PC-9 (cell line): ENCODE measurements at regions of chr6 and their contacts with region 1.

Region 1: GRCh38 chr6:70566751-70567382 is at the start of gene SDHAF4:
- DNase-seq: peak; percentile 70 to 93
- H3K4me3 ChIP-seq: peak within 1 kb of the TSS; percentile 79
- H3K27ac ChIP-seq: no peak within 1 kb of the TSS
- H3K4me1 ChIP-seq: no peaks in the 10 kb centered on the region
- H3K27me3 ChIP-seq: no peaks in the 10 kb centered on the region
- CTCF ChIP-seq: no peak
- total RNA-seq, gene SDHAF4: 29.1 and 40.1 TPM in 2 replicates

Region 2: DNA sequence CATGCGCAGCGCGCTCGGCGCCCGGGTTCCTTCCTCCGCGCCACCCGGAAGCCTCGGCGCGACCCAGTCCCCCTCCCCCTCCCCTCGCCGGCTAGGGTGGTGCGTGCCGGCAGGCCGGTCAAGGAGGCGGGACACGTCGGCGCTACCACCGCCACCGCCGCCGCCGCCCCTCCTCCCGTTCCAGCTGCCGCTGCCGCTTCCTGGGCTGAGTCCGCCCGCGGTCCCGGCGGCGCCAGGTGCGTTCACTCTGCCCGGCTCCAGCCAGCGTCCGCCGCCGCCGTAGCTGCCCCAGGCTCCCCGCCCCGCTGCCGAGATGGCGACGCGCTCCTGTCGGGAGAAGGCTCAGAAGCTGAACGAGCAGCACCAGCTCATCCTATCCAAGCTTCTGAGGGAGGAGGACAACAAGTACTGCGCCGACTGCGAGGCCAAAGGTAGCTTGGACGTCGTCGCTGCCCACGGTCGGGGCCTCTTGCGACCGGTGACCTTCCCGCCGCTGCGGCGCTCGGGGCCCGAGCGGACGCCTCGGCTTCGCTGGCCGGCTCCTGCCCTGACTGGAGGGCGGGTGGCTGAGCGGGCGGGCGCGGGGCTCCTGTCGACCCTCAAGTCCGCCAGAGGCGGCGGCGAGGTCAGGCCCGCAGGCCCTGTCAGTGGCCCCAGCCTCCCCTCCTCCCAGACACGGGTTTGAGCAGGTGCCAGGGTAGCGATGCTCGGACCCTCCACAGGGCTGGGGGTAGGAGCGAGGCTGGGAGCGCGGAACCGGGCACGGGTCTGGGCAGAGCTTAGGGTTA is 101.0 kb after region 1 on chr6 and contains the start of gene SMAP1:
- CTCF ChIA-PET with region 1: no interaction called
- POLR2A ChIA-PET with region 1: interaction called, 4 read pairs
- intact Hi-C with region 1: loop called (anchors 1 kb)
- DNase-seq: peak; percentile 77 to 98
- H3K4me3 ChIP-seq: peak within 1 kb of the TSS; percentile 72
- H3K27ac ChIP-seq: peak within 1 kb of the TSS; percentile 71
- H3K4me1 ChIP-seq: peaks cover 22% of the 10 kb centered on the region
- H3K27me3 ChIP-seq: no peaks in the 10 kb centered on the region
- CTCF ChIP-seq: no peak
- total RNA-seq, gene SMAP1: 20.6 and 29.3 TPM in 2 replicates